ENCODE measurements at regions of chr12 and their contacts with region 1.

Region 1: GRCh38 chr12:57111031-57111734 is at the start of gene STAT6:
- DNase-seq: peak; percentile 48
- ATAC-seq: peak; percentile 8
- H3K4me3 Mint-ChIP-seq: peak within 1 kb of the TSS; percentile 72
- H3K27ac Mint-ChIP-seq: peak within 1 kb of the TSS; percentile 98
- H3K4me1 Mint-ChIP-seq: peaks cover 36% of the 10 kb centered on the region
- H3K27me3 Mint-ChIP-seq: no peaks in the 10 kb centered on the region
- CTCF ChIP-seq: no peak
- total RNA-seq, gene STAT6: 47.0 to 50.0 TPM (median 48.9 TPM) in 3 replicates

Region 2: DNA sequence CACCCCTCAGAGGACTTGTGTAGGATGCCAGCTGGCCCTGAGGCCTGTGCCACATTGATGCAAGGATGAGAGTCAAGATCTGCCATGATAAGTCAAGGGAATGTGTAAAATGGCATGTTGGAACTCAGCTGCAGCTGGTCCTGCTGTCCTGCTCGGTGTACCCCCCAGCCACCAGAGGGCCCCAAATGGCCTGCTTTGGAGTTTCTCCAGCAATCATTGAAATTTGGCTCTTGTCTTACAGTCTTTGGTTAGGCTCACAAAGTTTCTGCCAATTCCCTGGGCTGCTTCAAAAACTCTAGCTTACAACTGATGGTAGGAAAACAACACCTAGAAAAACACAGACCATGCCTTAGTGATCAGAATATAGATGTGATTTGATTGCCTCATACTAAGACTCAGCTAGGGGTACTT is 271.3 kb before region 1 on chr12:
- CTCF ChIA-PET with region 1: interaction called, 22 read pairs
- POLR2A ChIA-PET with region 1: no interaction called
- DNase-seq: peak; percentile 78
- ATAC-seq: peak; percentile 91
- H3K4me3 Mint-ChIP-seq: no peak overlapping the region
- H3K27ac Mint-ChIP-seq: no peak overlapping the region
- H3K4me1 Mint-ChIP-seq: no peaks in the 10 kb centered on the region
- H3K27me3 Mint-ChIP-seq: peaks cover 12% of the 10 kb centered on the region
- CTCF ChIP-seq: peak; percentile 22; the same call in 1 of the 2 replicates

Region 3: GRCh38 chr12:57019983-57020719 is 91.0 kb before region 1 on chr12:
- CTCF ChIA-PET with region 1: interaction called, 22 read pairs
- POLR2A ChIA-PET with region 1: interaction called, 4 read pairs
- DNase-seq: no peak
- ATAC-seq: no peak
- H3K4me3 Mint-ChIP-seq: no peak overlapping the region
- H3K27ac Mint-ChIP-seq: no peak overlapping the region
- H3K4me1 Mint-ChIP-seq: peaks cover 3% of the 10 kb centered on the region; the same call in 1 of the 2 replicates
- H3K27me3 Mint-ChIP-seq: no peaks in the 10 kb centered on the region
- CTCF ChIP-seq: no peak

Region 4: GRCh38 chr12:57069523-57069922 is 41.7 kb before region 1 on chr12:
- CTCF ChIA-PET with region 1: interaction called, 270 read pairs
- POLR2A ChIA-PET with region 1: interaction called, 32 read pairs
- DNase-seq: peak; percentile 50
- ATAC-seq: peak; percentile 99
- H3K4me3 Mint-ChIP-seq: no peak overlapping the region
- H3K27ac Mint-ChIP-seq: peak overlapping the region; percentile 34
- H3K4me1 Mint-ChIP-seq: no peaks in the 10 kb centered on the region
- H3K27me3 Mint-ChIP-seq: no peaks in the 10 kb centered on the region
- CTCF ChIP-seq: peak; percentile 64

Region 5: DNA sequence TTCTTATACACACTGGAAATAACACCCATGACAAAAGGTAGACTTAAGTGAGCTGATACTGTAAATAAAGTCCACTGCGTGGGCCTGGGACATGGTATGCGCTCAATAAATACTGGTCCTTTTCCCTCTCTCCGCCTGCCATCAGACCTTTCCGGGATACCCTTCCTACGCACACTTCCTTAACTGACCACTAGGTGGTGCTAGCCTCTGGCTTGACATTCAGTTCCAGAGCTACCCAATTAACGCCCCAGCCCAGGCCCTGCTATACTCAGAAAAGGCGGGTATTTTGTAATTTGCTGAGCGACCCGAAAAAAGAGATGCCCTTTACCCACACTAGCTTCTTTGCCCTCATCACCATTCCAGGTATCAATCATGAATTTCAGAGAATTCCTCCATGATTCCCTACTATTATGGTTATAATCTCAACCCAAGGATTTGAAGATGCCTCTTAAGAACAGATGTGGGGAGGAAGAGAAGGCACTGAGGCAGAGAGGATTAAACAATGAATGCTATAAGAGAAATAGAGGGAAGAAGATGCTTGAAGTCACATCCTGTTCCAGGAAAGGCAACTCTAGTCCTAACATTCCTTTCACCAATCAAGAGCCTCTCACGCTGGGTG is 13.2 kb after region 1 on chr12:
- CTCF ChIA-PET with region 1: interaction called, 85 read pairs
- POLR2A ChIA-PET with region 1: interaction called, 21 read pairs
- DNase-seq: peak; percentile 84
- ATAC-seq: peak; percentile 59
- H3K4me3 Mint-ChIP-seq: no peak overlapping the region
- H3K27ac Mint-ChIP-seq: no peak overlapping the region
- H3K4me1 Mint-ChIP-seq: peaks cover 15% of the 10 kb centered on the region
- H3K27me3 Mint-ChIP-seq: peaks cover 6% of the 10 kb centered on the region
- CTCF ChIP-seq: peak; percentile 92

Region 6: DNA sequence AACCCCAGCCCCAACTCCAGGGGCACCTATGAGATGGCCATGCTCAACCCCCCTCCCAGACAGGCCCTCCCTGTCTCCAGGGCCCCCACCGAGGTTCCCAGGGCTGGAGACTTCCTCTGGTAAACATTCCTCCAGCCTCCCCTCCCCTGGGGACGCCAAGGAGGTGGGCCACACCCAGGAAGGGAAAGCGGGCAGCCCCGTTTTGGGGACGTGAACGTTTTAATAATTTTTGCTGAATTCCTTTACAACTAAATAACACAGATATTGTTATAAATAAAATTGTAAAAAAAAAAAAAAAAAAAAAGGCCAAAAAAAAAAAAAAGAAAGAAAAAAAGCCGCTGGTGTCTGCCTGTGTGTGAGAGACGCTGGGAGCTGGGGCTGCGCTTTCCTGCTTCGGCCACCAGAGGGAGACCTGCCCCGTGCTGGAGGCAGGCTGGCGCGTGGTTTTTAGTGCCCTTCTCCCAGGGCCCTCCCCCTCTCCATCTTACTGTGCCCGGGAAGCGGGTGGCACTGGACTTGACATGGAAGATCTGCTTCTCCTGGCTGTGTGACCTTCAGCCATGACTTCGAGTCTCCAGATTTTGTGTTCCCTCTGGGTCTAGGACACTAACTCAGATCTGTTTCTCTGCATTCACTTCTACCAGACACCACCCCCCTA is 102.0 kb after region 1 on chr12:
- CTCF ChIA-PET with region 1: interaction called, 19 read pairs
- POLR2A ChIA-PET with region 1: no interaction called
- DNase-seq: peak; percentile 87
- ATAC-seq: peak; percentile 14
- H3K4me3 Mint-ChIP-seq: peak overlapping the region; percentile 53
- H3K27ac Mint-ChIP-seq: peak overlapping the region; percentile 79; the same call in 1 of the 2 replicates
- H3K4me1 Mint-ChIP-seq: peaks cover 35% of the 10 kb centered on the region
- H3K27me3 Mint-ChIP-seq: peaks cover 44% of the 10 kb centered on the region
- CTCF ChIP-seq: peak; percentile 87